ENCODE measurements at regions of chr12 and their contacts with region 1.

Region 1: GRCh38 chr12:77685112-77685511 is 145.6 kb upstream of the NAV3 start:
- DNase-seq: peak; percentile 90
- H3K4me3 ChIP-seq: peak overlapping the region; percentile 47
- H3K27ac ChIP-seq: no peak overlapping the region
- H3K4me1 ChIP-seq: peaks cover 10% of the 10 kb centered on the region; the same call in 1 of the 2 replicates
- H3K27me3 ChIP-seq: no peaks in the 10 kb centered on the region

Region 2: GRCh38 chr12:77031745-77032144 is 653.4 kb before region 1 on chr12:
- in situ Hi-C with region 1: loop called (anchors 10 kb)
- DNase-seq: peak; percentile 69
- H3K4me3 ChIP-seq: no peak overlapping the region
- H3K27ac ChIP-seq: peak overlapping the region; percentile 76
- H3K4me1 ChIP-seq: peaks cover 19% of the 10 kb centered on the region
- H3K27me3 ChIP-seq: no peaks in the 10 kb centered on the region

Region 3: GRCh38 chr12:77152623-77153193 is 532.4 kb before region 1 on chr12:
- in situ Hi-C with region 1: loop called (anchors 10 kb)
- DNase-seq: peak; percentile 77
- H3K4me3 ChIP-seq: no peak overlapping the region
- H3K27ac ChIP-seq: no peak overlapping the region
- H3K4me1 ChIP-seq: peaks cover 8% of the 10 kb centered on the region; the same call in 1 of the 2 replicates
- H3K27me3 ChIP-seq: no peaks in the 10 kb centered on the region

Region 4: DNA sequence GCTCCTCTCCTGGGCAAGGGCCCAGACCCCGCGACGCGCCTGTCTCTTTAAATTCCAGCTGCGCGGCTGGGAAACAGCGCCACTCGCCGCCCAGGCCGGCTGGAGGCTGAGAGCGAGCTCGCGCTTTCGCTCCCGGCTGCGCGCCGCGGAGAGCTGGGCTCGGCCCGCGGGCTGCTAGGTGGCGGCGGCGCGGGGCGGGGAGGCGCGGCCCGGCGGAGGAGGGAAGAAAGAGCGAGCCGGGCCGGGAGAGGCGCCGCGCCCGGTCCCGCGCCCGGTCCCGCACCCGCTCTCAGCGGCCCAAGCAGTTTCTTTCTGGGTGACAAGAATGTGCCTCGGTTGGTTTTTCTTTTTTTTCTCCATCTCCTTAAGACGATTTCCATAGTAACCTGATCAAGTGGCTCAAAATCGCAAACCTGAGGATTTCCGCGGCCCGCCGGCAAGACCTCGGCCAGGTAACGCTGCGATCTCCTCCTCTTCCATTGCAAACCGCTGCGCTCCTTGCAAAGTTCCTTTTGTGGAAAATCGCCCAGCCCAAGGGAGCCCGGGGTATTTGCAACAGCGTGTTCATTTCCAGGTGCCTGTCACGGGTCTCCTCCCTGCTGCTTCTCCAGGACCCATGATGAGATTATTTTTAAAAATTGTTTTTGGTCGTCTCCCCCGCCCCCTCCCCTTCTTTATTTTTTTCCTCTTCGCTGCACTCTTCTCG is 360.2 kb before region 1 on chr12:
- in situ Hi-C with region 1: loop called (anchors 25 kb)
- DNase-seq: peak; percentile 91
- H3K4me3 ChIP-seq: peak overlapping the region; percentile 95
- H3K27ac ChIP-seq: no peak overlapping the region
- H3K4me1 ChIP-seq: no peaks in the 10 kb centered on the region
- H3K27me3 ChIP-seq: 0 out of 2 replicates have a peak, but pooled peaks cover 5% of the 10 kb centered on the region

Measured in GM23248 (cell line).